A673 (cell line): ENCODE measurements at regions of chr2 and their contacts with region 1.

Region 1: DNA sequence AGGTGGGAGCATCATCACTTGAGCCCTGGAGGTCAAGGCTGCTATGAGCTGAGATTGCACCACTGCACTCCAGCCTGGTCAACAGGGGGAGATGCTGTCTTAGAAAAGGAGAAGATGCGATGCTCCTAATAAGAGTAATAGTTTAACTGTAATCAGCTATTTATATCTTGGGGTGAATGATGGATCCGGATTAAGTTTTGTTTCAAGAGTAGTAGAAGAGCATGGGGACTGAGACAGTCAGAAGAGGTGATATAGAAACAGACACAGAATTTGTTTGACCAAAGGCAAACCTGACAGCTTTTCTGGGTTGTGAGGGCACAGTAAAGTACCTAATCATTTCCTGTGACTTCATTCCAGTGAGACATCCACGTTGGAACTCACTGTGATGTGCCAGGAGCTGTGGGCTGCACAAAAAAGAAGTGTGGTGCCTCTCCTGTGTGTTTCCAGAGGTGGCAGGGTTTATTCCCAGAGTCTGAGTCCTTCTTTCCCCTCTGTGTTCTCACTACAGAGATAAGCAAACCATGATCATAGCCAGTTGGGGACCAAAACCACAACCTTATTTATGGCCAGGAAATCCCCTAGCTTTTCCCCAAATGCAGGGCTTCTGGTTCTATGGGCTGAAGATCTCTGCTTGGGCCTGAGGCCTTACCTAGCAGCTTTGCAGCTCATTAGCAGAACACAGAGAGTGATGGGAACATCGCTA is 113.7 kb downstream of the XRCC5 start:
- DNase-seq: peak; percentile 38
- H3K4me3 ChIP-seq: no peak overlapping the region
- H3K27ac ChIP-seq: no peak overlapping the region
- H3K4me1 ChIP-seq: peaks cover 2% of the 10 kb centered on the region
- H3K27me3 ChIP-seq: no peaks in the 10 kb centered on the region
- CTCF ChIP-seq: peak; percentile 48

Region 2: GRCh38 chr2:217076657-217077232 is 853.9 kb after region 1 on chr2:
- CTCF ChIA-PET with region 1: no interaction called
- POLR2A ChIA-PET with region 1: interaction called, 18 read pairs
- intact Hi-C with region 1: no loop called
- DNase-seq: no peak
- H3K4me3 ChIP-seq: no peak overlapping the region
- H3K27ac ChIP-seq: no peak overlapping the region
- H3K4me1 ChIP-seq: no peaks in the 10 kb centered on the region
- H3K27me3 ChIP-seq: no peaks in the 10 kb centered on the region
- CTCF ChIP-seq: no peak